ENCODE measurements at regions of chr1 and their contacts with region 1.

Region 1: DNA sequence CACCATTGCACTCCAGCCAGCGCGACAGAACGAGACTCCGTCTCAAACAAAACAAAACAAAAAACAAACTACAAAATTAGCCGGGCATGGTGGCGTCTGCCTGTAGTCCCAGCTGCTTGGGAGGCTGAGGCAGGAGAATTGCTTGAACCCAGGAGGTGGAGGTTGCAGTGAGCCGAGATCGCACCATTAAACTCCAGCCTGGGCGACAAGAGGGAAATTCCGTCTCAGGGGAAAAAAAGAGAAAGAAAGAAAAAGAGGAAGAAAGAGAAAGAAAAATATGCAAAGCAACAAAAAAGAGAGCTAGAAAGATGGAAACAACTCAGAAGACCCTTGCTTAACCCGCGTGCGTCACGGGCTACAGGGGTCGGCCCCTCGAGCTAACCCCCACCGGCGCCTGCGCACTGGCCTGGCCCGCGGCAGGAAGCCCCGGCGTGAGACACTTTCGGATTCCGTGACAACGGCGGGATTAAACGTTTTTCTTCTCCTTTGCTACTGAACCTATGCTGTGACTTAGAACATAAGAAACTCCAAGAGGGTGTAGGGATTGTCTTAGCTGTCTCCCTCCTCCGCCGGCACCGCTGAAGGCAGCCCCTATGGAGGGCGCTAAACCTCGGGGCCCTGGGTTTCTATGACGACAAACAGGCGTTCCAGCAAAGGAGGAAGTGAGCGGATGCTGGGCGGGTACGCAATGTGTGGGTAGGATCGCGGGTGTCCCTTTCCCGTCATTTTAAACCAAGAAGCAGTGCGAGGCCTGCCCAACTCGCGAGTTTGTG is at the start of gene AXDND1:
- DNase-seq: peak; percentile 86 to 94 (median 90)
- ATAC-seq: peak; percentile 97
- H3K4me3 ChIP-seq: peak within 1 kb of the TSS; percentile 57
- H3K27ac ChIP-seq: peak within 1 kb of the TSS; percentile 96
- H3K4me1 ChIP-seq: peaks cover 14 to 16% of the 10 kb centered on the region in 2 experiments
- H3K27me3 ChIP-seq: no peaks in the 10 kb centered on the region
- CTCF ChIP-seq: peak in 2 of 3 experiments; percentile 40 to 54; a peak in 4 of 6 replicates
- EP300 ChIP-seq: 0 out of 2 replicates have a peak, but pooled peaks have one; percentile 24
- POLR2A ChIP-seq: peak; percentile 76
- RAD21 ChIP-seq: peak; percentile 6 to 22; a peak in 2 of 4 replicates
- polyA plus RNA-seq, gene AXDND1: 0.03 to 0.13 TPM

Region 2: GRCh38 chr1:178542560-178543356 is 822.7 kb before region 1 on chr1:
- CTCF ChIA-PET with region 1: no interaction called
- POLR2A ChIA-PET with region 1: no interaction called
- in situ Hi-C with region 1: loop called (anchors 25 kb)
- intact Hi-C with region 1: loop called (anchors 10 kb)
- DNase-seq: peak; percentile 85 to 94 (median 91)
- ATAC-seq: peak; percentile 96
- H3K4me3 ChIP-seq: peak overlapping the region; percentile 51
- H3K27ac ChIP-seq: no peak overlapping the region
- H3K4me1 ChIP-seq: peaks cover 0 to 16% of the 10 kb centered on the region in 2 experiments; a peak in 4 of 5 replicates
- H3K27me3 ChIP-seq: peaks cover 20 to 44% of the 10 kb centered on the region in 2 experiments
- CTCF ChIP-seq: peak; percentile 91 to 94 (median 93)
- EP300 ChIP-seq: no peak
- POLR2A ChIP-seq: no peak
- RAD21 ChIP-seq: peak; percentile 83 to 86

Region 3: GRCh38 chr1:178774263-178774662 is 591.2 kb before region 1 on chr1:
- CTCF ChIA-PET with region 1: interaction called, 6 read pairs
- POLR2A ChIA-PET with region 1: no interaction called
- in situ Hi-C with region 1: loop called (anchors 10 kb)
- intact Hi-C with region 1: loop called (anchors 1 kb)
- DNase-seq: peak in 1 of 4 experiments; percentile 37
- ATAC-seq: peak; percentile 59; the same call in 1 of the 3 replicates
- H3K4me3 ChIP-seq: no peak overlapping the region
- H3K27ac ChIP-seq: no peak overlapping the region
- H3K4me1 ChIP-seq: no peaks in the 10 kb centered on the region
- H3K27me3 ChIP-seq: no peaks in the 10 kb centered on the region
- CTCF ChIP-seq: peak in 2 of 3 experiments; percentile 30 to 69; a peak in 3 of 6 replicates
- EP300 ChIP-seq: no peak
- POLR2A ChIP-seq: no peak
- RAD21 ChIP-seq: peak; percentile 78 to 81

Region 4: GRCh38 chr1:179137623-179138255 is 227.8 kb before region 1 on chr1:
- CTCF ChIA-PET with region 1: no interaction called
- POLR2A ChIA-PET with region 1: no interaction called
- in situ Hi-C with region 1: no loop called
- intact Hi-C with region 1: no loop called
- DNase-seq: no peak
- ATAC-seq: peak; percentile 54
- H3K4me3 ChIP-seq: no peak overlapping the region
- H3K27ac ChIP-seq: no peak overlapping the region
- H3K4me1 ChIP-seq: peaks cover 0 to 9% of the 10 kb centered on the region in 2 experiments; a peak in 2 of 5 replicates
- H3K27me3 ChIP-seq: no peaks in the 10 kb centered on the region
- CTCF ChIP-seq: no peak
- EP300 ChIP-seq: no peak
- POLR2A ChIP-seq: no peak
- RAD21 ChIP-seq: no peak

Region 5: DNA sequence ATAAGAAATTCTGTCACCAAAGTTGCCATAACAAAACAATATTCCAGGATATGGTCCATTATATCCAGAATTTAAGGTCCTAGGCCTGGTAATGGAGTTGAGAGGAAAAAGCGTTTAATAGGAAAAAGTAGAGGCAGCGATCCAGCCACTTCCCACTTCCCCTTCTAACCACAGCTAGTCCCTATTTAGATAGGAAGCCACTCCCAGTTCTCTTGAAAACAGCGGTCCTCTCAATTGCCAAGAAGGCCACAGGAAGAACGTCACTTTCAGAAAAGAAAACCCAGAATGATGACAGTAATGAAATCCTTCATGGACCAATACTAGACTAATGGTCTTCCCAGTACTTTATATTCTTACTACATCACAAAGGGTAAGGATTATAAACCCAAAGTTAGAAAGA is 174.6 kb before region 1 on chr1:
- CTCF ChIA-PET with region 1: no interaction called
- POLR2A ChIA-PET with region 1: no interaction called
- in situ Hi-C with region 1: no loop called
- intact Hi-C with region 1: loop called (anchors 5 kb)
- DNase-seq: peak in 1 of 4 experiments; percentile 13
- ATAC-seq: no peak
- H3K4me3 ChIP-seq: no peak overlapping the region
- H3K27ac ChIP-seq: no peak overlapping the region
- H3K4me1 ChIP-seq: peaks cover 7 to 10% of the 10 kb centered on the region in 2 experiments; a peak in 2 of 5 replicates
- H3K27me3 ChIP-seq: no peaks in the 10 kb centered on the region
- CTCF ChIP-seq: no peak
- EP300 ChIP-seq: no peak
- POLR2A ChIP-seq: no peak
- RAD21 ChIP-seq: no peak

Region 6: GRCh38 chr1:179293340-179294327 is 71.9 kb before region 1 on chr1 and contains the start of gene SOAT1:
- CTCF ChIA-PET with region 1: interaction called, 4 read pairs
- POLR2A ChIA-PET with region 1: no interaction called
- in situ Hi-C with region 1: no loop called
- intact Hi-C with region 1: loop called (anchors 1 kb)
- DNase-seq: peak; percentile 98 to 99 (median 98)
- ATAC-seq: peak; percentile 98
- H3K4me3 ChIP-seq: peak within 1 kb of the TSS; percentile 72
- H3K27ac ChIP-seq: peak within 1 kb of the TSS; percentile 84
- H3K4me1 ChIP-seq: peaks cover 12 to 20% of the 10 kb centered on the region in 2 experiments; a peak in 4 of 5 replicates
- H3K27me3 ChIP-seq: no peaks in the 10 kb centered on the region
- CTCF ChIP-seq: peak in 2 of 3 experiments; percentile 16 to 38; a peak in 2 of 6 replicates
- EP300 ChIP-seq: no peak
- POLR2A ChIP-seq: peak; percentile 91
- RAD21 ChIP-seq: peak in 1 of 2 experiments; percentile 27; a peak in 2 of 4 replicates
- polyA plus RNA-seq, gene SOAT1: 9.2 to 11.9 TPM

Region 7: DNA sequence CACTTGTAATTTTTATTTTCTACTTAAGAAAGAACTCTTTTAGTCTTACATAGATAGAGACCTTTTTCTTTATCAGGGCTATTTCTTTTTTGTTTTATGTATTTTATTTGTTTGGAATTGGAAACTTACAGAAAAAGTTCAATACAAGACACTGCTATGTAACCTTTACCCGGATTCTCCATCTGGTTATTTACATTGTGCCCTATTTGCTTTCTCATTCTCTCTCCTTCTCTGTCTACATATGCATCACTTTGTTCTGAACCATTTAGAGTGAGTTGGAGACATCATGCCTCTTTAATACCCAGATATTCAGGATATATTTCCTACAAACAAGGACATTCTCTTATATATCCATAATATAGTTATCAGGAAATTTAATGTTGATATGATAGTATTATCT is 18.5 kb after region 1 on chr1:
- CTCF ChIA-PET with region 1: no interaction called
- POLR2A ChIA-PET with region 1: no interaction called
- in situ Hi-C with region 1: no loop called
- intact Hi-C with region 1: no loop called
- DNase-seq: no peak
- ATAC-seq: no peak
- H3K4me3 ChIP-seq: no peak overlapping the region
- H3K27ac ChIP-seq: no peak overlapping the region
- H3K4me1 ChIP-seq: no peaks in the 10 kb centered on the region
- H3K27me3 ChIP-seq: peaks cover 0 to 7% of the 10 kb centered on the region in 2 experiments; a peak in 2 of 5 replicates
- CTCF ChIP-seq: no peak
- EP300 ChIP-seq: no peak
- POLR2A ChIP-seq: no peak
- RAD21 ChIP-seq: no peak